ENCODE measurements at regions of chr17 and their contacts with region 1.

Region 1: GRCh38 chr17:55478986-55479385 is 32.3 kb downstream of the SMIM36 start:
- DNase-seq: peak in 1 of 2 experiments; percentile 35
- H3K4me3 ChIP-seq: no peak overlapping the region
- H3K27ac ChIP-seq: no peak overlapping the region
- H3K4me1 ChIP-seq: no peaks in the 10 kb centered on the region
- H3K27me3 ChIP-seq: no peaks in the 10 kb centered on the region
- CTCF ChIP-seq: no peak

Region 2: GRCh38 chr17:55549140-55549539 is 70.2 kb after region 1 on chr17:
- CTCF ChIA-PET with region 1: no interaction called
- POLR2A ChIA-PET with region 1: no interaction called
- intact Hi-C with region 1: no loop called
- DNase-seq: no peak
- H3K4me3 ChIP-seq: no peak overlapping the region
- H3K27ac ChIP-seq: no peak overlapping the region
- H3K4me1 ChIP-seq: no peaks in the 10 kb centered on the region
- H3K27me3 ChIP-seq: peaks cover 54% of the 10 kb centered on the region
- CTCF ChIP-seq: peak; percentile 53; the same call in 1 of the 2 replicates

Region 3: DNA sequence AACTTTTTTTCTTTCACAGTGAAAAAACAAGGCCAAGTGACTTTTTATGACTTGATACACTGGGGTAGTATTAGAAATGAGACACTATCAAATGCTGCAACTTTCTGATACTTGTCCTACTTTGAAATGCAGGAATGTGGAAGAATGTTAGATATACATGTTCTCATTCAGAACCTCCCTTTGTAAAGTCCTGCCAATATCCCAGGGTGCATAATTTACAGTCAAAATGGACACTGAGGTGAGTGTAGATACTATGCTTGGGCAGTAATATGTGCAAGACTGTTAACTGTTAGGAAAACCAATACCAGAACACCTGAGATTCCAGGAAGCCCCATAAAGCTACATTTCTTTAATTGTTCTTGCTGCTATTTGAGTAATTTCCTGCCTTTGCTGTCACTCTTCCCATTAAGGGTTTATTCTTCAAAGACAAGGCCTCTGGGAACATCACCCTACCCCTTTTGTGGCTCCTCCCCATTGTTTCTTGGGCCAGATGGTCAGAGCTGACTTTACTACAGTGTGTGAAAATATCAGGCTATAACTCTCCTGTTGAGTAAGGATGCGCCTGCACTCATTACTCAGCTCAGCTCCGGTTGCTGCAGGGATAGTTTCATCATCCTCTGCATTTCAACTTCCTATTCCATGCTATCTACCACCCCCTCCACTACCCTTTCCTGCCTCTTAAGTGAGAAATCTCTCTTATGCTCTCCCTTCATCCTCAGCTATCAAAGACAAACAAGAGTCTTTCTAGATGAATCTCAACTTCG is 194.9 kb after region 1 on chr17:
- CTCF ChIA-PET with region 1: interaction called, 11 read pairs
- POLR2A ChIA-PET with region 1: no interaction called
- intact Hi-C with region 1: no loop called
- DNase-seq: no peak
- H3K4me3 ChIP-seq: no peak overlapping the region
- H3K27ac ChIP-seq: no peak overlapping the region
- H3K4me1 ChIP-seq: no peaks in the 10 kb centered on the region
- H3K27me3 ChIP-seq: peaks cover 42% of the 10 kb centered on the region
- CTCF ChIP-seq: no peak